Prostate gland (tissue), 2 donors: ENCODE measurements at regions of chrX and their contacts with region 1.

Region 1: DNA sequence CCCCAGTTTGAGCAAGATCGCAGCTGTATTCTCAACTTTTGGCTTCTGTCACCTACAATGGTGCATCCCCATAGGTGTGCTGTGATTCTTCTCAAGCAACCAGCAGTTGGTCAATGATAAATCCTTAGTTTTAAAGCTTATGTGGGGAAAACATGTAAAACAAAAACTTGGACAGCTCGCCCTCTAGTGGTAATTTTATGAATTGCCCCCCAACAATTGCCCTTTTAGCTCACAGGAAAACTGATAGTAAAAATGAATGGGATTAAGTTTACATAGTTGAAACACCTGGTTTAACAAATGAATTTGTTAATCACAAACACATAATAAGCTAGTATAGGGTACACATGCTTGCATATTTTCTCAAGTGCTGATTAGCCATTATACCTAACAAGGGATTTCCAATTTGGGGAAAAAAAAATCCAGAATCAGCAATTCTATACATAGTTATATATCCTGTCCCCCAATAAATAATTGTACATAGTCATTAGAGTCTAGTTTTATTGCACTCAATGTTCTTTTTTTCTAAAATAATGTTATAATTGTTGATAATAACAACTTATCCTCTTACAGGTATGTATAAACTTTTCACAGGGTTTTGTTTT is 30.1 kb downstream of the TEX13A start:
- DNase-seq: peak; percentile 5
- H3K4me3 ChIP-seq: no peak overlapping the region
- H3K27ac ChIP-seq: no peak overlapping the region
- H3K4me1 ChIP-seq: no peaks in the 10 kb centered on the region
- H3K27me3 ChIP-seq: no peaks in the 10 kb centered on the region
- CTCF ChIP-seq: peak; percentile 26 to 61 (median 56)
- POLR2A ChIP-seq: no peak

Region 2: GRCh38 chrX:104309171-104309570 is 881.2 kb before region 1 on chrX:
- intact Hi-C with region 1: loop called (anchors 10 kb)
- DNase-seq: no peak
- H3K4me3 ChIP-seq: no peak overlapping the region
- H3K27ac ChIP-seq: no peak overlapping the region
- H3K4me1 ChIP-seq: no peaks in the 10 kb centered on the region
- H3K27me3 ChIP-seq: no peaks in the 10 kb centered on the region
- CTCF ChIP-seq: no peak
- POLR2A ChIP-seq: no peak

Region 3: GRCh38 chrX:104565791-104566680 is 624.3 kb before region 1 on chrX and contains the start of gene IL1RAPL2:
- intact Hi-C with region 1: loop called (anchors 5 kb)
- DNase-seq: peak; percentile 12
- H3K4me3 ChIP-seq: no peak within 1 kb of the TSS
- H3K27ac ChIP-seq: no peak within 1 kb of the TSS
- H3K4me1 ChIP-seq: no peaks in the 10 kb centered on the region
- H3K27me3 ChIP-seq: no peaks in the 10 kb centered on the region
- CTCF ChIP-seq: peak in 3 of 4 experiments; percentile 18 to 32 (median 20)
- POLR2A ChIP-seq: no peak
- total RNA-seq, gene IL1RAPL2: 0.51 TPM in 1 of 2 donors, not detected in the other

Region 4: DNA sequence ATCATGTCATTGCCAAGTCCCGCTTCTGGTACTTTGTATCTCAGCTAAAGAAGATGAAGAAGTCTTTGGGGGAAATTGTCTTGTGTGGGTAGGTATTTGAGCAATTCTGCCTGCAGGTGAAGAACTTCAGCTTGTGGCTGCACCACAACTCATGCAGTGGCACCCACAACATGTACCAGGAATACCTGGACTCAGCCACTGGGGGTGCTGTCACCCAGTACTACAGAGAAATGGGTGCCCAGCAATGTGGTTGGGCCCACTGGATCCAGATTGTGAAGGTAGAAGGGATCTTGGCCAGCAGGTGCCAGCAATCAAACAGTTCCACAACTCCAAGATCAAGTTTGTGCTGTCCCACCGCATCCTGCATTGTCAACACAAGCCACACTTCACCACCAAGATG is 386.3 kb before region 1 on chrX:
- intact Hi-C with region 1: no loop called
- DNase-seq: no peak
- H3K4me3 ChIP-seq: no peak overlapping the region
- H3K27ac ChIP-seq: no peak overlapping the region
- H3K4me1 ChIP-seq: no peaks in the 10 kb centered on the region
- H3K27me3 ChIP-seq: no peaks in the 10 kb centered on the region
- CTCF ChIP-seq: no peak
- POLR2A ChIP-seq: no peak

Region 5: GRCh38 chrX:104913348-104913747 is 277.0 kb before region 1 on chrX:
- intact Hi-C with region 1: loop called (anchors 5 kb)
- DNase-seq: no peak
- H3K4me3 ChIP-seq: no peak overlapping the region
- H3K27ac ChIP-seq: no peak overlapping the region
- H3K4me1 ChIP-seq: no peaks in the 10 kb centered on the region
- H3K27me3 ChIP-seq: no peaks in the 10 kb centered on the region
- CTCF ChIP-seq: peak in 1 of 4 experiments; percentile 14
- POLR2A ChIP-seq: no peak